Colonic mucosa (tissue), 4 donors: ENCODE measurements at regions of chr4 and their contacts with region 1.

Region 1: DNA sequence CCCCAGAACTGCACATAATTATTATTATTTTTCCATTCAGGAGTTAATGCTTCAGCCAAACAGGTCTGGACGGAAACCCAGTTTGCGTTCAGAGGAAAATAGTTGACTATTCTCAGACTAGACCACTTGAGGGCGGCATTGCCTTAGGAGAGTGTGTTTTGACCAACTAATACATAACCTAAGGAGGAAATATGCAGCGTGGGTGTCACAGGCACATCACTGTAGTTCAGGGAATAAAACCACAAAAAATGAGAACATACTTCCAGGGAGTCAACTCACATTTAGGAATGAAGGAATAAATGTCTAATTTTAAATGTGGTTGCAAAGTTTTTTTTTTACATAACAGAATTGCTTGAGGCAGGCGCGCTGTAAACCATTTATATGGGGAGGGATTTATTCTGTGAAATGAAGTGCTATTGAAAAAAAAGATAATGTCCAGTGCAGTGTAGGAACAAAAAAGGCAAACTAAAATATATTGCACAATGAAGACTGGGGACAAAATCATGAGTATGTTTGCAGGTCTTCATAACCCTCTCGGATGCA is 93.3 kb downstream of the SYNPO2 start:
- DNase-seq: peak; percentile 69
- H3K4me3 ChIP-seq: no peak overlapping the region
- H3K27ac ChIP-seq: no peak overlapping the region
- H3K4me1 ChIP-seq: no peaks in the 10 kb centered on the region
- H3K27me3 ChIP-seq: no peaks in the 10 kb centered on the region
- CTCF ChIP-seq: peak; percentile 56

Region 2: GRCh38 chr4:119038116-119038841 is 56.4 kb after region 1 on chr4:
- intact Hi-C with region 1: no loop called
- DNase-seq: no peak
- H3K4me3 ChIP-seq: no peak overlapping the region
- H3K27ac ChIP-seq: peak overlapping the region; percentile 12
- H3K4me1 ChIP-seq: no peaks in the 10 kb centered on the region
- H3K27me3 ChIP-seq: no peaks in the 10 kb centered on the region
- CTCF ChIP-seq: no peak

Region 3: GRCh38 chr4:119299741-119300100 is 317.8 kb after region 1 on chr4:
- intact Hi-C with region 1: loop called (anchors 5 kb)
- DNase-seq: no peak
- H3K4me3 ChIP-seq: peak overlapping the region; percentile 67
- H3K27ac ChIP-seq: peak overlapping the region; percentile 98
- H3K4me1 ChIP-seq: no peaks in the 10 kb centered on the region
- H3K27me3 ChIP-seq: no peaks in the 10 kb centered on the region
- CTCF ChIP-seq: no peak

Region 4: GRCh38 chr4:119490335-119490734 is 508.4 kb after region 1 on chr4:
- intact Hi-C with region 1: loop called (anchors 10 kb)
- DNase-seq: no peak
- H3K4me3 ChIP-seq: no peak overlapping the region
- H3K27ac ChIP-seq: no peak overlapping the region
- H3K4me1 ChIP-seq: no peaks in the 10 kb centered on the region
- H3K27me3 ChIP-seq: no peaks in the 10 kb centered on the region
- CTCF ChIP-seq: no peak

Region 5: GRCh38 chr4:120049732-120050494 is 1068.0 kb after region 1 on chr4:
- intact Hi-C with region 1: loop called (anchors 10 kb)
- DNase-seq: peak; percentile 90
- H3K4me3 ChIP-seq: no peak overlapping the region
- H3K27ac ChIP-seq: peak overlapping the region; percentile 34
- H3K4me1 ChIP-seq: no peaks in the 10 kb centered on the region
- H3K27me3 ChIP-seq: no peaks in the 10 kb centered on the region
- CTCF ChIP-seq: peak; percentile 81